ENCODE measurements at regions of chr12 and their contacts with region 1.

Region 1: DNA sequence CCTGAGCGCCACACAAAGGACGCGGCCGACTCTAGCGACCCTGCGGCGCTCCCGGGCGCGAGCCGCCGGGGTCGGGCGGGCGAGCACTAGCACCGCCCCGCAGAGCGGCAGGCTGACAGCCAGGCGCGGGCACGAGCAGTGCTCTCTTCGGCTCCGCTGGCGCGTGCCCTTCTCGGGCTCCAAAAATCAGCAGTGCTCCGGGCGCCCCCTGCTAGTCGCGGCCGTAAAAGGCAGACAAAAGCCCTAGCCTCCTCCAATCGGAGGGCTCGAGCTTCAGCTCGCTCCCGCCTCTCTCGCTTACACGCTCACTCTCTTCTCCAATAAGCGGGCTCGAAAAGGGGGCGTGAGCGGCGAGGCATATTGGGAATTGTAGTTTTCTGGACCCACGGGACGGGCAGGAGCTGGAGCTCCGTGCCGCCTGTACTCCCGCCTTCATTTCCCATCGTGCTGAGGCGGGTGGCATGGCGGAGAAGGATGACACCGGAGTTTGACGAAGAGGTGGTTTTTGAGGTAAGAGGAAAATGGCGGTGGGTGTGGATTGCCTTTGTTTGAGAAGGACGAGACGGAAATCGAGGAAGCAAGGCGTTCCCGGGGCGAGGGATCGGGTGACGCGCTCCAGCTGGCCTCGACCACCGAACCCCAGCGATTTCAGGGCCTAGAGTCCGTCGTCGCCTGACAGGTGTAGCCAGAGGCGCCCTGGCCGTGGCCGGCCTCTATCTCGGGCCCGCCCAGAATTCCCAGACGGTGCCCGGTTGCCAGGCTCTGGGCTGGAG is at the starts of genes FGD6 and VEZT:
- DNase-seq: peak; percentile 99
- ATAC-seq: peak; percentile 97
- total RNA-seq, gene FGD6: 22.2 TPM
- total RNA-seq, gene VEZT: 51.5 TPM

Region 2: GRCh38 chr12:95143621-95144205 is 73.8 kb before region 1 on chr12:
- intact Hi-C with region 1: loop called (anchors 5 kb)
- DNase-seq: no peak
- ATAC-seq: peak; percentile 77

Region 3: GRCh38 chr12:95158919-95159318 is 58.6 kb before region 1 on chr12:
- intact Hi-C with region 1: loop called (anchors 5 kb)
- DNase-seq: no peak
- ATAC-seq: peak; percentile 81

Region 4: GRCh38 chr12:95633049-95633545 is 415.5 kb after region 1 on chr12:
- intact Hi-C with region 1: no loop called
- DNase-seq: no peak
- ATAC-seq: peak; percentile 55

Region 5: GRCh38 chr12:95742586-95742985 is 525.0 kb after region 1 on chr12:
- intact Hi-C with region 1: no loop called
- DNase-seq: no peak
- ATAC-seq: peak; percentile 18

Measured in Right ventricle myocardium inferior (tissue), 1 donor.